SK-N-SH (cell line): ENCODE measurements at regions of chr12 and their contacts with region 1.

Region 1: GRCh38 chr12:92987362-92987761 is 58.3 kb upstream of the EEA1 start:
- DNase-seq: peak; percentile 48
- H3K4me3 ChIP-seq: no peak overlapping the region; a peak in 1 of 4 replicates
- H3K27ac ChIP-seq: peak overlapping the region in 1 of 2 experiments; percentile 34; a peak in 1 of 4 replicates
- H3K4me1 ChIP-seq: peaks cover 0 to 5% of the 10 kb centered on the region in 2 experiments; a peak in 1 of 4 replicates
- H3K27me3 ChIP-seq: no peaks in the 10 kb centered on the region
- CTCF ChIP-seq: peak; percentile 72
- EP300 ChIP-seq: no peak
- RAD21 ChIP-seq: peak; percentile 91

Region 2: GRCh38 chr12:92828565-92828964 is 158.8 kb before region 1 on chr12:
- CTCF ChIA-PET with region 1: no interaction called
- POLR2A ChIA-PET with region 1: no interaction called
- DNase-seq: no peak
- H3K4me3 ChIP-seq: no peak overlapping the region
- H3K27ac ChIP-seq: no peak overlapping the region
- H3K4me1 ChIP-seq: no peaks in the 10 kb centered on the region
- H3K27me3 ChIP-seq: no peaks in the 10 kb centered on the region
- CTCF ChIP-seq: no peak
- EP300 ChIP-seq: no peak
- RAD21 ChIP-seq: no peak

Region 3: DNA sequence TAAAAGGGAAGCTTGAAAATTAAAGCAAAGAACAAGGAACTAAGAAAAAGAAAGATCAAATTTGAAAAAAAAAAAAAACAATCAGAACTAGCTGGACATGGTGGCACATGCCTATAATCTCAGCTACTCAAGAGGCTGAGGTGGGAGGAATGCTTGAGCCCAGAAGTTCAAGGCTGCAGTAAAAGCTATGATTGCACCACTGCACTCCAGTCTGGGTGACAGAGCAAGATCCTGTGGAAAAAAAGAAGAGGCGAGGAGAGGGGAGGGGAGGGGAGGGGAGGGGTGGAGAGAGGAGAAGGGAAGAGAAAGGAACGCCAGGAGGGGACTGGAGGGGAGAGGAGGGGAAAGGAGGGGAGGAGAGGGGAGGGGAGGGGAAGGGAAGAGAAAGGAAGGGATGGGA is 101.2 kb before region 1 on chr12:
- CTCF ChIA-PET with region 1: no interaction called
- POLR2A ChIA-PET with region 1: no interaction called
- DNase-seq: no peak
- H3K4me3 ChIP-seq: no peak overlapping the region
- H3K27ac ChIP-seq: no peak overlapping the region
- H3K4me1 ChIP-seq: no peaks in the 10 kb centered on the region
- H3K27me3 ChIP-seq: no peaks in the 10 kb centered on the region
- CTCF ChIP-seq: no peak
- EP300 ChIP-seq: no peak
- RAD21 ChIP-seq: no peak

Region 4: DNA sequence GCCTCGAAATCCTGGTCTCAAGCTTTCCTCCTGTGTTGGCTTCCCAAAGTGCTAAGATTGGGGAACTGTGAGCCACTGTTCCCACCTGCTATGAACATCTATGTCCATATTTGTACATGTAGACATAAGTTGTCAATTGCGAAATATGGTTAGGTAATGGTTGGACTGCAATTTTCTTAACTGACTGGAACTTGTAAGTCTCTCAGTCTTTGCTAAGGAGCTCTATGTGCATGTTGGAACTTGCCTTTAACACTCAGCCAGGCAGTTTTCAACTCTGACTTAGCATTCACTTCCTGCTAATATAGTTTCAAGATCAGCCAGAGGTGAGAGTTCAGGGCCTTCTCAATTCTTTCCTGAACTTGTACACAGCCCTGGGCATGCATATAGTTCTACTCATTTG is 13.8 kb before region 1 on chr12:
- CTCF ChIA-PET with region 1: interaction called, 37 read pairs
- POLR2A ChIA-PET with region 1: no interaction called
- DNase-seq: no peak
- H3K4me3 ChIP-seq: no peak overlapping the region
- H3K27ac ChIP-seq: no peak overlapping the region
- H3K4me1 ChIP-seq: no peaks in the 10 kb centered on the region
- H3K27me3 ChIP-seq: no peaks in the 10 kb centered on the region
- CTCF ChIP-seq: no peak
- EP300 ChIP-seq: no peak
- RAD21 ChIP-seq: no peak

Region 5: GRCh38 chr12:93008044-93008778 is 20.8 kb after region 1 on chr12:
- CTCF ChIA-PET with region 1: interaction called, 22 read pairs
- POLR2A ChIA-PET with region 1: no interaction called
- DNase-seq: no peak
- H3K4me3 ChIP-seq: no peak overlapping the region
- H3K27ac ChIP-seq: no peak overlapping the region
- H3K4me1 ChIP-seq: no peaks in the 10 kb centered on the region
- H3K27me3 ChIP-seq: no peaks in the 10 kb centered on the region
- CTCF ChIP-seq: no peak
- EP300 ChIP-seq: no peak
- RAD21 ChIP-seq: no peak

Region 6: DNA sequence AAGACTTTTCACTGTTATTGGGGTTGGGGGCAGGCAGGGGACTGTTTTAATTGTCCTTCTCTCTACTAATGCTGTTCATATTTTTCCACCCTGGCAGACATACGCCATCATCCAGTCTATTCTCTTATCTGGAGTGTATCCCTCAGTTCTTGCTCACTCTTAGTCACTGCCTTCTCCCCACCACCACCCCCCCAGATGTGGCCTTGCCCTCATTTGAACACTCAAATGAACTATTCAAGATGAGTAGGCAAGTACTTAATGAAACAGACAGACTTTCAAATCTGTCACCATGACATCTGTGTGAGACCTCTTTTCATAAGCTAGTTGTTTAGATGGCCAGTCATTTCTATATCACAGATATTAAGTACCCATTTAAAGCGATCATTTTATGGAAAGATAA is 400.4 kb after region 1 on chr12:
- CTCF ChIA-PET with region 1: interaction called, 34 read pairs
- POLR2A ChIA-PET with region 1: no interaction called
- DNase-seq: no peak
- H3K4me3 ChIP-seq: no peak overlapping the region
- H3K27ac ChIP-seq: peak overlapping the region in 1 of 2 experiments; percentile 44; a peak in 1 of 4 replicates
- H3K4me1 ChIP-seq: peaks cover 2 to 13% of the 10 kb centered on the region in 2 experiments; a peak in 2 of 4 replicates
- H3K27me3 ChIP-seq: no peaks in the 10 kb centered on the region
- CTCF ChIP-seq: no peak
- EP300 ChIP-seq: no peak
- RAD21 ChIP-seq: no peak

Region 7: DNA sequence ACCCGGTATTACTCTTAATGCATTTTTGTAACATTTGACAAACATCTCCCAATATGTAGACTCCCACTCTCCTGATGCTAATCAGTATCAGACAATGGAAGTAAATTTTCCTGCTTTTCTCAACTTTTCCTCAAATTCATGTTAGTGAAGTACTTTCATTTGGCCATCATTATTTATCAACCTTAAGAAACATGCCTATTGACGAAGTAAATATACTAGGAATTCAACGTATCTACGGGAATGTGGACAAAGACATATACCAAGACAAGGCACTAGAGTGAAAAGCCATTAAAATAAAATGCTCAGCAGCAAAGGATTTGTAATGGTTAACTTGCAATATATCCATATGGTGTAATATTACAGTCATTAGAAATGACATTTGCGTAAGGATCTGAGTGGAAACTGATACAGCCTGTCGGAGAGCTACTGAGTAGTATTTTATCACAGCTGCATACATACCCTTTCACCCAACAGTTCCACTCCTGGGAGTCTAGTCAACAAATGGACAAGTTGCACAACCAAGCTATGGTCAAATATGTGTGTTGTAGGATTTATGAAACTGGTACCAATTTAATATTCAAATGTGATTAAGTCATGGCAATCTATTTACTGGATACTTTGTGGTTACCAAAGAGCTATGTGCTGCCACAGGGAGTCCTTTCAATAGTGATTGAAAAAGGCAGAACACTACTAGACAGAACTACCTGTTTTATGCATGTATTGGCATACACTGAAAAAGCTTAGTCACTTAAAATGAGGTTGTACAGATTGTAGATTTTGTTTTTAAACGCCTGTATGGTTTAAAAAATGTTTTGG is 416.8 kb after region 1 on chr12:
- CTCF ChIA-PET with region 1: interaction called, 102 read pairs
- POLR2A ChIA-PET with region 1: no interaction called
- DNase-seq: no peak
- H3K4me3 ChIP-seq: no peak overlapping the region
- H3K27ac ChIP-seq: peak overlapping the region; percentile 16 to 23; a peak in 3 of 4 replicates
- H3K4me1 ChIP-seq: peaks cover 0 to 10% of the 10 kb centered on the region in 2 experiments; a peak in 3 of 4 replicates
- H3K27me3 ChIP-seq: no peaks in the 10 kb centered on the region
- CTCF ChIP-seq: no peak
- EP300 ChIP-seq: no peak
- RAD21 ChIP-seq: no peak